Transverse colon (tissue), 4 donors: ENCODE measurements at regions of chr2 and their contacts with region 1.

Region 1: DNA sequence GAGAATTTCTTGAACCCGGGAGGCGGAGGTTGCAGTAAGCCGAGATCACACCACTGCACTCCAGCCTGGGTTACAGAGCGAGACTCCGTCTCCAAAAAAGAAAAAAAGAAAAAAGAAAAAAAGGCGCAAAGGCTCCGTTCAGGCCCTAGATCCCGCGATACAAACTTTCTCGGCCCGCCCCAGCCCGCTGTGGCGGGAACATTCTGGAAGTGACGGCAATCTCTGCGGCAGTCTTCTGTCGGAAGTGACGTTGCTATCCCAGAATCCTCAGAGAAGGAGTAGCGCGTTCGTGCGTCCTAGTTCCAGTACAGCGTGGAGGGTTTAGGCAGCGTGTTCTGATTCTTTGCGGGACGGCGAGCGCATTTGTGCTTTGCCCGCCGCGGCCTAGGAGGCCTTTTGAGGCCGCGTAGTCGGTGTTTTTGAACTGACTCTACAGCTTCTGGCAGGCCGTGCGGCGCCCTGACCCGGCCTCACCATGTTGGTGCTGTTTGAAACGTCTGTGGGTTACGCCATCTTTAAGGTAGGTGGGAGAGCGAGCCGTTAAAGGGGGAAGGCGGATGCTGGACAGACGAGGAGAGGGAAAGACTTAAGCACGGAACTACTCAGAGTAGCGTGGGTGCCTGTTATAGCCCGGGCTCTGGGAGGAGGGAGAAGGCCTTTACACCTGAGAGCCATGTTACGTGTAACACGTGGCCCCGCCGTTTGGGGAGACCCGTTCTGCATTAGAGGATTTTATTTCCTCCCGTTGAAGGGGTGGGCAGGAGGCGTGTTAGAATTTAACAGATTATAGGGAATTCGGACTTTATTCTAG is at the start of gene NOP58:
- DNase-seq: peak; percentile 94
- H3K4me3 ChIP-seq: peak within 1 kb of the TSS; percentile 55 to 92 (median 76)
- H3K27ac ChIP-seq: peak within 1 kb of the TSS; percentile 93 to 100 (median 99)
- H3K4me1 ChIP-seq: peaks cover 5 to 46% (median 17%) of the 10 kb centered on the region in 4 donors
- H3K27me3 ChIP-seq: no peaks in the 10 kb centered on the region
- CTCF ChIP-seq: no peak
- EP300 ChIP-seq: peak; percentile 33
- POLR2A ChIP-seq: peak; percentile 98
- total RNA-seq, gene NOP58: 9.4 to 54.9 (median 26.3) TPM

Region 2: DNA sequence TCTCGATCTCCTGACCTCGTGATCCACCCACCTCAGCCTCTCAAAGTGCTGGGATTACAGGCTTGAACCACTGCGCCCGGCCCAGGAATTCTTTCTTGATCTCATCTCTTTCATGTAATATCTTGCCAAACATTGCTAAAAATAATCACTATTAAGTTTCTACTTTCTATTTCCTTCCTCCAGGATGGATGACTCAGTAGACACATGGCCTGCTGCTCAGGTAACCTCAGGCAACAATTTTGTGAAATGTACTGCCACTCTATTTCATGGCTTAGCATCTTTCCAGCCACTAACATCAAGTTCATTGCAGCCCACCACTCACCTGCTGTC is 16.2 kb before region 1 on chr2:
- in situ Hi-C with region 1: no loop called
- intact Hi-C with region 1: loop called (anchors 1 kb)
- DNase-seq: no peak
- H3K4me3 ChIP-seq: no peak overlapping the region
- H3K27ac ChIP-seq: no peak overlapping the region
- H3K4me1 ChIP-seq: no peaks in the 10 kb centered on the region
- H3K27me3 ChIP-seq: no peaks in the 10 kb centered on the region
- CTCF ChIP-seq: no peak
- EP300 ChIP-seq: no peak
- POLR2A ChIP-seq: no peak

Region 3: GRCh38 chr2:202375609-202376408 is 110.1 kb after region 1 on chr2 and contains the start of gene BMPR2:
- in situ Hi-C with region 1: no loop called
- intact Hi-C with region 1: loop called (anchors 5 kb)
- DNase-seq: peak; percentile 92
- H3K4me3 ChIP-seq: peak within 1 kb of the TSS; percentile 78 to 84 (median 80)
- H3K27ac ChIP-seq: peak within 1 kb of the TSS; percentile 95 to 99 (median 96)
- H3K4me1 ChIP-seq: peaks cover 0 to 31% (median 16%) of the 10 kb centered on the region in 4 donors
- H3K27me3 ChIP-seq: no peaks in the 10 kb centered on the region
- CTCF ChIP-seq: no peak
- EP300 ChIP-seq: no peak
- POLR2A ChIP-seq: peak; percentile 81
- total RNA-seq, gene BMPR2: 16.5 to 40.5 (median 26.5) TPM

Region 4: GRCh38 chr2:202870431-202871299 is 605.0 kb after region 1 on chr2:
- in situ Hi-C with region 1: no loop called
- intact Hi-C with region 1: no loop called
- DNase-seq: peak; percentile 57
- H3K4me3 ChIP-seq: peak overlapping the region; percentile 52 to 85 (median 74)
- H3K27ac ChIP-seq: peak overlapping the region; percentile 75 to 82 (median 80)
- H3K4me1 ChIP-seq: peaks cover 0 to 13% (median 6%) of the 10 kb centered on the region in 4 donors
- H3K27me3 ChIP-seq: no peaks in the 10 kb centered on the region
- CTCF ChIP-seq: peak; percentile 30 to 36 (median 34)
- EP300 ChIP-seq: no peak
- POLR2A ChIP-seq: no peak